PC-3 (cell line): ENCODE measurements at regions of chr5 and their contacts with region 1.

Region 1: DNA sequence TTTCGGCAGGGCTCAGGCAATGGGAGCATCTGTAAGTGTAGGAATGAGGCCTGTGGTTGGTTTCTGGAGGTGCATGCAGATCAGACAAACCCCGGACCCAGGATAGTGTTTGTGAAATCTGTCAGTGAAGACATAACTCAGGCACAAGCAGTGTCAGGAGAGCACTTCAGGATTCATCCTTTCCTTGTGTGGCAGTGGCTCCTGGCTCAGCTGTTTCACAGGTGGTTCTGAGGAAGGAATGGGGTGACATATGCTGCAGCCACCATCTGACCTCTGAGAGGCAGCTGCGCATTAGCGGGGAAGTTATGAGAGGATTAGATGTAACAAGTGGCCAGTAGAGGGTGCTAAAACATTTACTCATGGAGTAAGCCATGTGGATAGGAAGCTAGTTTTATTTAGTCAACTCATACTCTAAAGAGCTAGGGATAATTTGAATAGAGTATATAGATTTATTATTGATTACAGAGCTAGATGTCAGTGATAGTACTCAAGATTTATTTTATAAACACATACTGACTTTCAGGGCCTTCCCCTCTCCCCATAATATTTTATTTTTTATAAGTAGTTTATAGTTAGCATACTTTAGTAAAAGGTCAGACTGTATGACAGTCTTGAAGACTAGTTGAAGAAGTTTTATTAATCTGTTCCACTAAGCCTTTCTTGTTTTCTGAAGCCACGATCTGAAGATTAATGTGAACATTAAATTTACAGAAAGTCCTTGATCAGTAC is 28.4 kb downstream of the NNT start:
- DNase-seq: peak; percentile 93
- ATAC-seq: peak; percentile 98
- H3K4me3 ChIP-seq: no peak overlapping the region
- H3K27ac ChIP-seq: no peak overlapping the region
- H3K4me1 ChIP-seq: no peaks in the 10 kb centered on the region
- H3K27me3 ChIP-seq: no peaks in the 10 kb centered on the region
- CTCF ChIP-seq: peak; percentile 91

Region 2: GRCh38 chr5:43729846-43730478 is 98.6 kb after region 1 on chr5:
- CTCF ChIA-PET with region 1: interaction called, 3 read pairs
- POLR2A ChIA-PET with region 1: no interaction called
- intact Hi-C with region 1: loop called (anchors 1 kb)
- DNase-seq: peak; percentile 55
- ATAC-seq: no peak
- H3K4me3 ChIP-seq: no peak overlapping the region
- H3K27ac ChIP-seq: no peak overlapping the region
- H3K4me1 ChIP-seq: no peaks in the 10 kb centered on the region
- H3K27me3 ChIP-seq: peaks cover 24% of the 10 kb centered on the region
- CTCF ChIP-seq: peak; percentile 85

Region 3: GRCh38 chr5:43815504-43815903 is 184.2 kb after region 1 on chr5:
- CTCF ChIA-PET with region 1: no interaction called
- POLR2A ChIA-PET with region 1: no interaction called
- intact Hi-C with region 1: no loop called
- DNase-seq: no peak
- ATAC-seq: no peak
- H3K4me3 ChIP-seq: no peak overlapping the region
- H3K27ac ChIP-seq: no peak overlapping the region
- H3K4me1 ChIP-seq: no peaks in the 10 kb centered on the region
- H3K27me3 ChIP-seq: no peaks in the 10 kb centered on the region
- CTCF ChIP-seq: no peak

Region 4: DNA sequence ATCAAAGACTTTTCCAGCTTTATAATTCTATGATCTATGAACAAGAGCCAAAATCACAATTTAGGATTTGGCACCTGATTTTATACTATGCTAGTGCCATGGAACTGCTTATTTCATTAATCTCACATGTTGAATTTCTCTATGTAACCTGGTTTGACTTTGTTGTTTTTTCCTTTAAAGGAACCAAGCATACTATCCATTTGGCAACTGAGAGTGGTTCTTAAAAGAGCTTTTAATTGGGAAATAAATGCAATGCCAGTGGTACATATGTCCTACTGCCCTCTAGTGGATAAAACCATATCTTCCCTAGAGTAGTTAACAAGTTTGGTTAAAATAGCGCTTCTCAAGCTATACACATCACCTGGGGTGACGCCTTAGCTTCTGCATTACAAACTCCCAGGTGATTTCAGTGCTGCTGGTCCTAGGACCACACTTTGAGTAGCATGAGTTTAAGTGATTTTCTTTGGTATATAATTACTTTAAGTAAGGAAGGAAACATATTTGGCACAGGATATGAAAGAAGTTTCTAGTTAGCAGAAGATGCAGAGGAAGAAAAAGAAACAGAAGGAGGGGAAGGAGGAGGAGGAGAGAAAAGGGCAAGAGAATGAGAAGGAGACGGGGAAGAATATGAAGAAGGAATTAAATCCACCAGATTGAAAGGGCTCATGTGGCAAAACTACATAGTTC is 701.1 kb after region 1 on chr5:
- CTCF ChIA-PET with region 1: interaction called, 9 read pairs
- POLR2A ChIA-PET with region 1: no interaction called
- intact Hi-C with region 1: loop called (anchors 10 kb)
- DNase-seq: peak; percentile 82
- ATAC-seq: peak; percentile 65
- H3K4me3 ChIP-seq: no peak overlapping the region
- H3K27ac ChIP-seq: no peak overlapping the region
- H3K4me1 ChIP-seq: no peaks in the 10 kb centered on the region
- H3K27me3 ChIP-seq: peaks cover 17% of the 10 kb centered on the region
- CTCF ChIP-seq: peak; percentile 91

Region 5: DNA sequence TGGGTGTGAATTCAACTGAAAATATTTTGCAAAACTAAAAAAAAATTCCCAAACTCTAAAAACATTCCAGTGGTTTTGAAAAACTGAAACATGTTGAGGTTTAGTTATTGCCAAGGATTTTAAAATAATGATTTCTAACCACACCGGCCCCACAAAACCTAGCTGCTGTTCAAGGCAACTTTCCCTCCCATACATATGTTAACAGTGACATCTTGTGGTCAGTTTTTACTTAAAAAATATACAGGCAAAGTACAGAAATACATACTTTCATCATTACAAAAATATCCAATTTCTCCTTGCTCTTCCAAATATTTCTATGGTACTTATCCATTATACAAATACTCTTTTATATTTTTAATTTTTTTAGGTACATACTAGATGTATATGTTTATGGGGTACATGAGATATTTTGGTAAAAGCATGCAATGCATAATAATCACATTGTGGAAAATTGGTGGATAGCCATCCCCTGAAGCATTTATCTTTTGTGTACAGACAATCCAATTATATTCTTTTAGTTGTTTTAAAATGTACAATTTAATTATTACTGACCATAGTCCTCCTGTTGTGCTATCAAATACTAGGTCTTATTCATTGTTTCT is 1143.0 kb after region 1 on chr5:
- CTCF ChIA-PET with region 1: interaction called, 3 read pairs
- POLR2A ChIA-PET with region 1: no interaction called
- intact Hi-C with region 1: loop called (anchors 10 kb)
- DNase-seq: peak; percentile 81
- ATAC-seq: peak; percentile 64
- H3K4me3 ChIP-seq: no peak overlapping the region
- H3K27ac ChIP-seq: no peak overlapping the region
- H3K4me1 ChIP-seq: no peaks in the 10 kb centered on the region
- H3K27me3 ChIP-seq: peaks cover 31% of the 10 kb centered on the region
- CTCF ChIP-seq: peak; percentile 76